OCI-LY7 (cell line): ENCODE measurements at regions of chr11 and their contacts with region 1.

Region 1: DNA sequence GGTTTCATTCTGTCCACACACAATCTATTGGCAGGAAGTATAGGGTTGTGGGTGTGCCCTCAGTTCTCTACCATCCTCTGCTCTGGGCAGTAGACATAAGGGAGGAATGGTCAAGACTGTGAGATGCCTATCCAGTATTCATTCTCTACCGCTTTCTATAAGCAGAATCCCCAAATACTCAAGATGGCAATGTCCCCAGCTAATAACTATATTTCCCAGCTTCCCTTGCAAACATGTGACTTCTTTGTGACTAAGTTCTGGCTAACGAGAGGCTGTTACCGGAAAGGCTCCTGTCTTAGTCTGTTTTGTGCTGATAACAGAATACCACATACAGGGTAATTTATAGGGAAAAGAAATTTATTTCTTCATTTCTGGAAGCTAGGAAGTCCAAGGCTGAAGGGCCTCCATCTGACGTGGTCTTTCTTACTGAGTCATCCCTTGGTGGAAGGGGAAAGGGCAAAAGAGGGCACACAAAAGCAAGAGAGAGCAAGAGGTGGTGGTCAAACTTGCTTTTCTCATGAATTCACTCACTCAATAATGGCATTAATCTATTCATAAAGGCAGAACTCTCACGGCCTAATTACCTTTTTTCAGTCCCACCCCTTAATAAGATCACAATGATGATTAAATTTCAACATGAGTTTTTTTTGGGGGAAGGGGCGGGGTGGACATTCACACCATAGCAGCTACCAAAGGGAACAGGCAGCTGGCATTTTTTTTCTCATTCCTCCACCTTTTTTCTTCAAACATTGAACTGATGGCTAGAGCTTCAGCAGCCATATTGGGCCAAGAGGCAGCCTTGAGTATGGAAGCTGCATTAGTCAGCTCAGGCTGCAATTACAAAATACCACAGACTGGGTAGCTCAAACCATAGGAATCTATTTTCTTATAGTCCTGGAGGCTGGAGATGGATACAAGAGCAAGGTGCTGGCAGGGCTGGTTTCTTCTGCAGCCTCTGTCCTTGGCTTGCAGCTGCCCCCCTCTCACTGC is 109.7 kb upstream of the OR9Q1 start:
- DNase-seq: no peak
- H3K4me3 ChIP-seq: no peak overlapping the region
- H3K27ac ChIP-seq: no peak overlapping the region
- H3K4me1 ChIP-seq: no peaks in the 10 kb centered on the region
- CTCF ChIP-seq: no peak

Region 2: GRCh38 chr11:57903564-57904123 is 10.4 kb before region 1 on chr11:
- CTCF ChIA-PET with region 1: no interaction called
- POLR2A ChIA-PET with region 1: no interaction called
- intact Hi-C with region 1: loop called (anchors 1 kb)
- DNase-seq: no peak
- H3K4me3 ChIP-seq: no peak overlapping the region
- H3K27ac ChIP-seq: no peak overlapping the region
- H3K4me1 ChIP-seq: no peaks in the 10 kb centered on the region
- CTCF ChIP-seq: no peak